Motor neuron (in vitro differentiated cells): ENCODE measurements at regions of chr9 and their contacts with region 1.

Region 1: DNA sequence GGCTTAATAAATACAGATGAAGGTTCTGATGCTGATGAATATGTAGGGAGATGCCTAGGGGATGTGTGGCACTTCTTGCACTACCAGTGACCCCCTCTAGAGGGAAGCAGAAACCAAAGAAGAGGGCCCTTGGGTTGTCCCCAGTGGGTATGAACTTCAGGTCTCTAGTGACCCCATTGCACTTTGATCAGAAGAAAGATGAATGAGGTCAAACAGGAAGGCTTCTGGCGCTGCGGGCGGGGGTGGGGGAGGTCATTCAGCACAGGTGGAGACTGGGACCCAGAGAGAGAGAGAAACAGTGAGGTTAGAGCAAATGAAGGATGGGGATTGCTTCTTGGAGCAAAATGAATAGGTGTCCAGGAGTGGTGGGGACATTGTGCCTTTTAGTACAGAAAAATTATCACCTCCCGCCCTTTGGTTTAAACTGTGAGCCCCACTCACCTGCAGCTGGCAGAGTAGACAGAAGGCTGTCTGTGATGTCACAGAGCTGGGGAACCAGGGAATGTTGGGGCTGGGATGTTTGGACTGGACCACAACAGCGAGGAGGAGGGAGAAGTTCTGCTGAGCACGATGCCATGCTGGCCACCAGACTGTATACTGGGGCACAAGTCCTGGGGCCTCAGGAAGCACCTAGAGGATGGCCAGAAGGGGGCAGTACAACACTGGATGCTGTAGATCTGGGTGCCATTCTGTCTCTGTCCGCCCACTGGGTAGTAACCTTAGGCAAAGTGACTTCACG is at the start of gene TEX48:
- ATAC-seq: peak in 7 of 8 experiments; percentile 33 to 92 (median 53)
- H3K4me3 ChIP-seq: no peak within 1 kb of the TSS
- H3K27ac ChIP-seq: no peak within 1 kb of the TSS
- H3K4me1 ChIP-seq: peaks cover 15 to 18% of the 10 kb centered on the region in 2 donors
- total RNA-seq, gene TEX48: not detected

Region 2: DNA sequence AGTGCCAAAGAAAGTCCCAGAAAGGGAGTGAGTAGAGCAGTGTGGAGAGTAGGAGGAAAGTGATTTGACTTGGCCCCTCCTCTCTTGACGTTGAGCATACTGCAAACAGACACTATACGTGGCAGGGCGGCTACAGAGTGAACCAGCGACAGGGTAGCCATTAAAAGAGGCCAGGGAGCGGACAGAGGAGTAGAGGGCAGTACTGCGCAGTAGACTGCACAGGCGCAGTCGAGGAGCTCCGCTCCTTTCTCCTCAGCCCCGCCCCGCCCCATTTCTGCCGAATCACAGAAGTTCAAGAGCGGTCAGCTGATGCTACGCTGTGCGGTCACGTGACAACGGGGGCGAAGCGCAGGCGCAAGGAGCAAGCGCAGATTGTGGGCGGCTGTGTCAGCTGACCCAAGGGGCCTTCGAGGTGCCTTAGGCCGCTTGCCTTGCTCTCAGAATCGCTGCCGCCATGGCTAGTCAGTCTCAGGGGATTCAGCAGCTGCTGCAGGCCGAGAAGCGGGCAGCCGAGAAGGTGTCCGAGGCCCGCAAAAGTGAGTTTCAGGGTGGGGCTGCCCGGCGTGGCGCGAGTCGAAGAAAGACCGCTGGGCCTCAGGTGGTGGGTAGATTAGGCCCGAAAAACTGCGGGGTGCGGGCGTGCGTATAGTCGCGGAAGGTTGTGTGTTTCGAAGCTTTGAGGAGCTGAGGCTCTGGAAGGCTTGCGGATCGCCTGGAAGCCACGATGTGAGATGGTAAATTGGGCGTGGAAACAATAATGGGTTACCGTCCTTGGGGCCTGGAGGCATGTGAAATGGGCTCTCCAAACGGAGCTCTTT is 94.2 kb before region 1 on chr9 and contains the start of gene ATP6V1G1:
- in situ Hi-C with region 1: no loop called
- ATAC-seq: peak; percentile 89 to 98 (median 97)
- H3K4me3 ChIP-seq: peak within 1 kb of the TSS; percentile 74 to 99 (median 86)
- H3K27ac ChIP-seq: peak within 1 kb of the TSS; percentile 84 to 95
- H3K4me1 ChIP-seq: peaks cover 13 to 27% of the 10 kb centered on the region in 2 donors
- total RNA-seq, gene ATP6V1G1: 122 to 253 (median 198) TPM

Region 3: DNA sequence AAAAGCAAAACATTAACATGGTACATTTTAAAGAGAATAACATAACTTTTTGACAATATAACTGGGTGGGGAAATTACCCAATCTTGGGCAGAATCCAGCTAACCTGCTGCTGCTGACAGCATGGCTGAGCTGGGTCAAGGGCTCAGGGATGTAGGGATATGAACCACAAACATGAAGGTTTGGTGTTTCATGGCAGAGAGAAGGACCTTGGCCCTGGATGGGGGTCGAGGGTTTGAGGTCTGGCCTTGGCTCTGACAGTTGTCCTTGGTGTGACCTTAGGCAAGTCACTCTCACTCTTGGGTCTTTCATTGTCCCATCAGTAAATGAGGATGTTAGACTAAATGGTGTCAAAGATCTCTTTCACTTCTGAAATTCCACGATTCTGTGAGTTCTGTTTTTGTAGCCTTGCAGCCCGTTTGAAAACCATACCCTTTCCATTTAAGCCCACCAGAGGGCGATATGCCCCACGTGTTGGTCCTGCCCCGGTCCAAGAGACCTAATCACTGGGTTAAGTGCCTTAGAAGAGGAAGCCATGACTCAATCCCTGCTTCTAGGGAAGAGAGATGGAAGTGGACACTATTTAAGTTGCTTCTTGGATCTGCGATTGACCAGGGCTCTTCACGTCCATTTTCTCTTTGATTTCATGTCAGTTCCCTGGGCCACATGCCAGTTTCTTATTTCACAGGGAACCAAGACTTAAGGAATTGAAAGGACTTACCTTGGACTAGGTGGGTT is 57.0 kb after region 1 on chr9:
- in situ Hi-C with region 1: loop called in 1 of 9 experiments (anchors 10 kb)
- ATAC-seq: peak in 6 of 8 experiments; percentile 31 to 92 (median 82)
- H3K4me3 ChIP-seq: no peak overlapping the region
- H3K27ac ChIP-seq: no peak overlapping the region
- H3K4me1 ChIP-seq: no peaks in the 10 kb centered on the region

Region 4: DNA sequence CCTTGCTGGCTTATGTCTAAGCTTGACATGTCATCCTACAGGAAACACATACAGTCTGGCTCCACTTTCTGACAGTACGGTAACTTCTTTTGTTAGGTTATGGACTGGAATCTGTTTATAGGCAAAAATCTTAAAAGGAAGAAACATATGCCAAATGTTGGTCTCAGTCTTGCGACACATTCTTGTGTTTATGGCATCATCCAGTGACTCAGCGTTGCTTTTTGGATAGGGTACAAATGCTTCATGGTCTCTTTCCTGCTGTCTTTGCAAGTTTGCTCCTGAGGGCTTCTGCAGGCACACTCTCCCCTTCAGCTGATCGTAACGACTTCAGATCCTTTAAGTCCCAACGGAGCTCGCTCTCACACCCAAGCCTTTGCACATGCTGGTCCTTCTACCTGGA is 272.2 kb after region 1 on chr9:
- in situ Hi-C with region 1: no loop called
- ATAC-seq: peak in 2 of 8 experiments; percentile 74 to 79
- H3K4me3 ChIP-seq: no peak overlapping the region
- H3K27ac ChIP-seq: no peak overlapping the region
- H3K4me1 ChIP-seq: no peaks in the 10 kb centered on the region